ENCODE measurements at regions of chr19 and their contacts with region 1.

Region 1: GRCh38 chr19:46373421-46374359 is 26.8 kb downstream of the PPP5C start:
- DNase-seq: peak; percentile 99
- H3K4me3 ChIP-seq: peak overlapping the region; percentile 21; the same call in 1 of the 2 replicates
- H3K27ac ChIP-seq: peak overlapping the region; percentile 92
- H3K4me1 ChIP-seq: peaks cover 55% of the 10 kb centered on the region
- H3K27me3 ChIP-seq: no peaks in the 10 kb centered on the region
- CTCF ChIP-seq: peak; percentile 42; the same call in 1 of the 2 replicates

Region 2: GRCh38 chr19:46192992-46193650 is 180.6 kb before region 1 on chr19:
- CTCF ChIA-PET with region 1: no interaction called
- POLR2A ChIA-PET with region 1: no interaction called
- intact Hi-C with region 1: loop called (anchors 10 kb)
- DNase-seq: peak; percentile 74 to 94
- H3K4me3 ChIP-seq: no peak overlapping the region; the same call in 1 of the 2 replicates
- H3K27ac ChIP-seq: peak overlapping the region; percentile 82
- H3K4me1 ChIP-seq: peaks cover 63% of the 10 kb centered on the region
- H3K27me3 ChIP-seq: no peaks in the 10 kb centered on the region
- CTCF ChIP-seq: no peak

Region 3: DNA sequence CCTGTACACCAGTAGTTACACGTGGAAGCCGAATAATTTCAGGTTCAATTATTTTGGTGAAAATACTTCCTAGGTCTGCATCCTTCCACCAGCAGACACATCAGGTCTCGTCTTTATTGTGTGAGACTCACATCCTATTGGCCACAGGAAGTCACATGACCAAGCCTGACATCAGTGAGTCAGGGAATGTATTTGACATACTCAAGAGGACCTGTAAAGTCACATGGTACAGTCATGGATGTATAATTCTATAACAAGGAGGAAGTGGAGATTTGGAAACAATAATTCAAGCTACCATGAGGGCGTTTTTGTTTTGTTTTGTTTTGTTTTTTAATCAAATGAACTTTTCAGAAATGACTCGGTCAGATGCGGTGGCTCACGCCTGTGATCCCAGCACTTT is 86.1 kb before region 1 on chr19:
- CTCF ChIA-PET with region 1: interaction called, 3 read pairs
- POLR2A ChIA-PET with region 1: no interaction called
- intact Hi-C with region 1: loop called (anchors 5 kb)
- DNase-seq: peak in 1 of 2 experiments; percentile 43
- H3K4me3 ChIP-seq: no peak overlapping the region
- H3K27ac ChIP-seq: no peak overlapping the region
- H3K4me1 ChIP-seq: peaks cover 12% of the 10 kb centered on the region; the same call in 1 of the 2 replicates
- H3K27me3 ChIP-seq: peaks cover 7% of the 10 kb centered on the region; the same call in 1 of the 2 replicates
- CTCF ChIP-seq: no peak

Region 4: DNA sequence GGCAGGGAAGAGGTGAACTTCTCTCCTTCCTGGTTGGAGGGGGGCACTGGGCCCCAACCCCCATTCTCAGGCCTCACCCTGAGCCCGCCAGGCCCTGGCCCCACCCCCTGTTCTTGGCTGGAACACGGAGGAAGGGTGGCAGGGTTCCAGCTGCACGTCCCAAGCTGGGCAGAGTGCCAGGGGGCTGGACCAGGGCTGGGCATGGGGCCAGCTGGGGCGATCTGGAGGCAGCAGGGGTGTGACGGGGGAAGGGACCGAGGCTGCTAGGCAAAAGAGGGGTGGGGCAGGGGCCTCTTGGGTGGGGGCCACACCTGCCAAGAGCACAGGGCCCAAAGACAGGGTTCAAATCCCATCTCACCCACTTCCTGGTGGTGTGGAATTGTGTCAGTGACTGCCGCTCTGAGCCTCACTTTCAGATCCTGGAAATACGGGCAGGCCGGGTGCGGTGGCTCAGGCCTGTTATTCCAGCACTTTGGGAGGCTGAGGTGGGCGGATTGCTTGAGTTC is 74.6 kb before region 1 on chr19:
- CTCF ChIA-PET with region 1: no interaction called
- POLR2A ChIA-PET with region 1: no interaction called
- intact Hi-C with region 1: loop called (anchors 5 kb)
- DNase-seq: peak; percentile 74 to 98
- H3K4me3 ChIP-seq: no peak overlapping the region; the same call in 1 of the 2 replicates
- H3K27ac ChIP-seq: no peak overlapping the region
- H3K4me1 ChIP-seq: peaks cover 29% of the 10 kb centered on the region
- H3K27me3 ChIP-seq: peaks cover 6% of the 10 kb centered on the region; the same call in 1 of the 2 replicates
- CTCF ChIP-seq: no peak

Region 5: GRCh38 chr19:46346821-46347571 is 26.7 kb before region 1 on chr19 and contains the start of gene PPP5C:
- CTCF ChIA-PET with region 1: interaction called, 4 read pairs
- POLR2A ChIA-PET with region 1: no interaction called
- intact Hi-C with region 1: loop called (anchors 1 kb)
- DNase-seq: peak; percentile 86 to 93
- H3K4me3 ChIP-seq: peak within 1 kb of the TSS; percentile 97
- H3K27ac ChIP-seq: peak within 1 kb of the TSS; percentile 20; the same call in 1 of the 2 replicates
- H3K4me1 ChIP-seq: peaks cover 12% of the 10 kb centered on the region
- H3K27me3 ChIP-seq: peaks cover 13% of the 10 kb centered on the region
- CTCF ChIP-seq: peak; percentile 97
- total RNA-seq, gene PPP5C: 74.7 and 85.4 TPM in 2 replicates

Region 6: GRCh38 chr19:46600384-46601317 is 227.0 kb after region 1 on chr19:
- CTCF ChIA-PET with region 1: interaction called, 11 read pairs
- POLR2A ChIA-PET with region 1: no interaction called
- intact Hi-C with region 1: no loop called
- DNase-seq: peak; percentile 91 to 96
- H3K4me3 ChIP-seq: peak overlapping the region; percentile 100
- H3K27ac ChIP-seq: peak overlapping the region; percentile 93
- H3K4me1 ChIP-seq: peaks cover 12% of the 10 kb centered on the region; the same call in 1 of the 2 replicates
- H3K27me3 ChIP-seq: no peaks in the 10 kb centered on the region
- CTCF ChIP-seq: no peak

Region 7: GRCh38 chr19:47848823-47849473 is 1475.3 kb after region 1 on chr19:
- CTCF ChIA-PET with region 1: no interaction called
- POLR2A ChIA-PET with region 1: interaction called, 14 read pairs
- intact Hi-C with region 1: no loop called
- DNase-seq: peak in 1 of 2 experiments; percentile 23
- H3K4me3 ChIP-seq: no peak overlapping the region; the same call in 1 of the 2 replicates
- H3K27ac ChIP-seq: no peak overlapping the region
- H3K4me1 ChIP-seq: peaks cover 13% of the 10 kb centered on the region; the same call in 1 of the 2 replicates
- H3K27me3 ChIP-seq: peaks cover 48% of the 10 kb centered on the region
- CTCF ChIP-seq: peak; percentile 73

Measured in PC-9 (cell line).